ENCODE measurements at regions of chr2 and their contacts with region 1.

Region 1: GRCh38 chr2:231104115-231104713 is 20.6 kb downstream of the HTR2B start:
- DNase-seq: peak; percentile 86
- H3K4me3 ChIP-seq: no peak overlapping the region
- H3K27ac ChIP-seq: no peak overlapping the region
- H3K4me1 ChIP-seq: peaks cover 10% of the 10 kb centered on the region
- H3K27me3 ChIP-seq: no peaks in the 10 kb centered on the region
- CTCF ChIP-seq: peak; percentile 61 to 70
- POLR2A ChIP-seq: no peak

Region 2: DNA sequence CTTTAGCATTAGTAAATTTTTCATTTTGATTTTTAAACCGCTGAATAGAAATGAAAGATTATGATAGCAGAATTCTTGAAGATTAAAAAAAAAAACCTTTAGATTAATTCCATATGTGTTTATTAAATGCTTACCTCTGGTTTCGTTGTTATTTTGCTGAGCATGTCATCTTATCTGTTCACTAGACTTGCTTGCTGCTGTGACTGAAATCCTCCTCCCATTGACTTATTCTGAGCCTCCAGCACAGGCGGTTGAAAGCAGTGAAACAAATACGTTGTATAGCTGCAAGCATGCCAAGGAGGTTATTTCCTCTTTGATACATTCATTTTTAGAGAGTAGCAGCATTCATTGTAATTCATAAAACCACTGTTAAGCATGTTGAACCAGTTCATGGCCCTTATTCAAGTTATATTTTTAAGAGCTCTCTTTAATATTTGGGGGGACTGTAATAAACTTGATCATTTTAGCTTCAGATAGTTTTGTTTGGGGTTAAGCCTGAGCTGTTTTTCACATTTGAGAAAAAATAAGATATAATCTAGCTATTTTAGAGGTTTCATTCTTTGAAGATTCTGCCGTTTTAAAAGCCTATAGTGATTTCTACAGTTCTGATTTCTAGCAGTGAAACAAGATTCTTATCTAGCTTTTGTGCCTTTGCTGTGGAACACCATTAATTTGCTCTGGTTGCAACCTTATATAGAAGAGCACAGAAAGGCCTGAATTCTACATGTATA is 20.8 kb after region 1 on chr2 and contains the start of gene HTR2B:
- CTCF ChIA-PET with region 1: interaction called, 11 read pairs
- POLR2A ChIA-PET with region 1: no interaction called
- dilution Hi-C with region 1: no loop called
- intact Hi-C with region 1: no loop called
- DNase-seq: peak; percentile 69
- H3K4me3 ChIP-seq: peak within 1 kb of the TSS in 1 of 3 experiments; percentile 65
- H3K27ac ChIP-seq: peak within 1 kb of the TSS; percentile 23
- H3K4me1 ChIP-seq: peaks cover 38% of the 10 kb centered on the region
- H3K27me3 ChIP-seq: no peaks in the 10 kb centered on the region
- CTCF ChIP-seq: no peak
- POLR2A ChIP-seq: no peak
- total RNA-seq, gene HTR2B: 0.55 and 0.93 TPM in 2 replicates

Region 3: DNA sequence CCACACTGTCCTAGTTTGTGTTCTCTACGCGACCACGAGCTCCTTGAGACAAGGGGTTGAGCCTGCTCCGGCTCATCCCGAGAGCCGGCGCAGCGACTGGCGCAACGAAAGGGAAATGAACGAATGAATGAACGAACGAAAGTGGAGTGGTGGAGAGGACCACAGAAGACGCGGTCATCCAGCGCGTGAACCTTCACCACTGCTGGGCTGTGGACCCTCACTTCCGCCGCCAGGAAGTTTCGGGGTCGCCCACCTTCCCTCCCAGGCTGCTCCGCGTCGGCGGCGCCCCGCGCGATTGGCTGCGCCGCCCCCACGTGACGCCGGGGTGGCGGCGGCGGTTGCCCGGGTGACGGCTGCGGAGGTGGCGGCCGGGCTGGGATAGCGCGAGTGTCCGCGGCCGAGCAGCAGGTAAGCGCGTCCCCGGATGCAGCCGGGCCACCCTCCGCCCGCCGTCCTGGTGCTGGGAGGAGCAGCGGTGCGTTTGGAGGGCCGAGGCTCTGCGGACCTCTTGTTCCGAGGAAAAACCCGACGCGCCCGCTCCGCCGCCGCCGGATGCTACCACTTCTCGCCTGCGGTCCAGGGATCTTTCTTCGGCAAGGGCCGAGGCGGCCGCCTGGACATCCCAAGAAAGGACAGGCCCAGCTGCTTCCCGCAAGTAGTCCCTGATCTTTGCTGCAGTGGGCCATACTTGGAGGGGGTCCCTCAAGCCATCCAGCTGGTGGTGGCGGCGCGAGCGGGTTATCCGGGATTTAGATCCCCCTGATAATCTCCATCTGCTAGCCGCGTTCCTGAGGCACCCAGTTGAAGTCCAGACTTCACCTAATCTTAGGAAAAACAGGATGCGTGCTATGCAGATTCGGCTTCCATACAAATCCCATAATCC is 94.3 kb after region 1 on chr2 and contains the start of gene ARMC9:
- CTCF ChIA-PET with region 1: interaction called, 226 read pairs
- POLR2A ChIA-PET with region 1: no interaction called
- dilution Hi-C with region 1: no loop called
- intact Hi-C with region 1: no loop called
- DNase-seq: peak; percentile 68
- H3K4me3 ChIP-seq: peak within 1 kb of the TSS; percentile 60 to 91 (median 81)
- H3K27ac ChIP-seq: peak within 1 kb of the TSS; percentile 0
- H3K4me1 ChIP-seq: peaks cover 13% of the 10 kb centered on the region
- H3K27me3 ChIP-seq: no peaks in the 10 kb centered on the region
- CTCF ChIP-seq: no peak
- POLR2A ChIP-seq: peak; percentile 90
- total RNA-seq, gene ARMC9: 19.3 and 24.2 TPM in 2 replicates

Region 4: DNA sequence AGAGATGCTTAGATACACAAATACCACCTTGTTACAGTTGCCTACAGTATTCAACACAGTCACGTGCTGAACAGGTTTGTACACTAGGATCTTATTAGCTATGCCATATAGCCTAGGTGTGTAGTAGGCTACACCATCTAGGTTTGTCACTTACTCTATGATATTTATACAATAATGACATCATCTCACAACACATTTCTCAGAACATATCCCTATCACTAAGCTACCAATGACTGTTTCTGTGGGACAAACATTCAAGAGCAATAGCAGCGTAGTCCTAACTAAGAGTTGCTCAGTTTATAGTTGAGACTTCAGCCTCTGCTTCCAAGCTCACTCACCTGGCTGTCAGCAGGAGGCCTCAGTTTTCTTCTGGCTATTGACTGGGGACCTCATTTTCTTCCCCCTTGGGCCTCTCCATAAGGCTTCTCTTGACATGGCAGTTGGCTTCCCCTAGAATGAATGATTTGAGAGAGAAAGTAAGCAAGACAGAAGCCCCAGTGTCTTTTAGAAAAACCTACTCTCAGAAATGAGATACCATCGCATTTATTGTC is 180.0 kb after region 1 on chr2:
- CTCF ChIA-PET with region 1: no interaction called
- POLR2A ChIA-PET with region 1: no interaction called
- dilution Hi-C with region 1: no loop called
- intact Hi-C with region 1: no loop called
- DNase-seq: no peak
- H3K4me3 ChIP-seq: no peak overlapping the region
- H3K27ac ChIP-seq: no peak overlapping the region
- H3K4me1 ChIP-seq: no peaks in the 10 kb centered on the region
- H3K27me3 ChIP-seq: no peaks in the 10 kb centered on the region
- CTCF ChIP-seq: no peak
- POLR2A ChIP-seq: no peak

Region 5: GRCh38 chr2:231297108-231297908 is 193.1 kb after region 1 on chr2:
- CTCF ChIA-PET with region 1: interaction called, 12 read pairs
- POLR2A ChIA-PET with region 1: no interaction called
- dilution Hi-C with region 1: no loop called
- intact Hi-C with region 1: loop called (anchors 5 kb)
- DNase-seq: peak; percentile 52
- H3K4me3 ChIP-seq: no peak overlapping the region
- H3K27ac ChIP-seq: no peak overlapping the region
- H3K4me1 ChIP-seq: peaks cover 18% of the 10 kb centered on the region
- H3K27me3 ChIP-seq: no peaks in the 10 kb centered on the region
- CTCF ChIP-seq: peak; percentile 63 to 88
- POLR2A ChIP-seq: no peak

Region 6: GRCh38 chr2:231411831-231412617 is 307.8 kb after region 1 on chr2:
- CTCF ChIA-PET with region 1: interaction called, 42 read pairs
- POLR2A ChIA-PET with region 1: no interaction called
- dilution Hi-C with region 1: no loop called
- intact Hi-C with region 1: loop called (anchors 1 kb)
- DNase-seq: peak; percentile 81
- H3K4me3 ChIP-seq: peak overlapping the region; percentile 18 to 73 (median 21)
- H3K27ac ChIP-seq: no peak overlapping the region
- H3K4me1 ChIP-seq: peaks cover 3% of the 10 kb centered on the region
- H3K27me3 ChIP-seq: no peaks in the 10 kb centered on the region
- CTCF ChIP-seq: peak; percentile 91 to 97
- POLR2A ChIP-seq: no peak

Measured in endothelial cell of umbilical vein (primary cell).